Sigmoid colon (tissue), 7 donors: ENCODE measurements at regions of chr13 and their contacts with region 1.

Region 1: DNA sequence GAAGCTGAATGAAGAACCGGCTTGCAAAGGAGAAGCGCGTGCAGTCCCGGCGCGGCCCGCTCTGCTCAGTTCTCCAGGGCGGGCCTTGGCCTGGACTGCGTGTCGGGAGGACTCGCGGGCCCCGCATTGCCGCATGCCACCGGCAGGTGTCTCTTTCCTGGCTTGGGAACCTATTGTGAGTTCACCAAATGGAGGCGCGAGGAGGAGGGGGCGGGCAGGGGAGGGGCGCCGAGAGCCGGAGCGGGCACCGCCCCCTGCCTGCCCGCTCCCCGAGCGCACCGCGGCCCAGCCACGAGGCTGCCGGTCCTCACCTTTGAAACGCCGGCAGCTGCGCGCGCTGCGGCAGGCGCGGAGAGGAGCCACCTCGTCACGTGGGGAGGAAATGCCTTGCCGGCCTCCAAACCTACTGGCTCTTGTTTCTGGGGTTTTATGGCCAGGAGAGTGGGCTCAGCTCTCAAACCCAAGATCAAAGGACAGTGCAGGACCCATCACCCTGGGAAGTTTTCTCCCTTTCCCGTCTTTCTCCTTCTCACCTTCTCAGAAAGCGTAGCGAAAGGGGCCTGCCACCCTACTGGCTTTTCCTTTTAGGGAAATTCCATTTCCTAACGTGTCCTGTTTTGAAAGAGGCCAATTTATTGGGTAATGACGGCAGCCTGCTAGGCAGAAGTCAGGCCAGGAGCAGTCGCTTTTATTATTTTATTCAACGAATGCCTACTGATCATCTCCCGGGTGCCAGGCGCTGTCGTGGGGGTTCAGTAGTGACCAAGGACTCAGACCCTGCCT is 13.8 kb upstream of the UBE2L5 start:
- DNase-seq: peak; percentile 98
- H3K4me3 ChIP-seq: peak overlapping the region; percentile 2 to 42 (median 32)
- H3K27ac ChIP-seq: peak overlapping the region; percentile 84 to 91 (median 88)
- H3K4me1 ChIP-seq: peaks cover 0 to 23% (median 20%) of the 10 kb centered on the region in 4 donors
- H3K27me3 ChIP-seq: no peaks in the 10 kb centered on the region
- CTCF ChIP-seq: peak; percentile 59 to 90 (median 71)
- EP300 ChIP-seq: peak in 1 of 4 donors; percentile 14
- POLR2A ChIP-seq: no peak

Region 2: DNA sequence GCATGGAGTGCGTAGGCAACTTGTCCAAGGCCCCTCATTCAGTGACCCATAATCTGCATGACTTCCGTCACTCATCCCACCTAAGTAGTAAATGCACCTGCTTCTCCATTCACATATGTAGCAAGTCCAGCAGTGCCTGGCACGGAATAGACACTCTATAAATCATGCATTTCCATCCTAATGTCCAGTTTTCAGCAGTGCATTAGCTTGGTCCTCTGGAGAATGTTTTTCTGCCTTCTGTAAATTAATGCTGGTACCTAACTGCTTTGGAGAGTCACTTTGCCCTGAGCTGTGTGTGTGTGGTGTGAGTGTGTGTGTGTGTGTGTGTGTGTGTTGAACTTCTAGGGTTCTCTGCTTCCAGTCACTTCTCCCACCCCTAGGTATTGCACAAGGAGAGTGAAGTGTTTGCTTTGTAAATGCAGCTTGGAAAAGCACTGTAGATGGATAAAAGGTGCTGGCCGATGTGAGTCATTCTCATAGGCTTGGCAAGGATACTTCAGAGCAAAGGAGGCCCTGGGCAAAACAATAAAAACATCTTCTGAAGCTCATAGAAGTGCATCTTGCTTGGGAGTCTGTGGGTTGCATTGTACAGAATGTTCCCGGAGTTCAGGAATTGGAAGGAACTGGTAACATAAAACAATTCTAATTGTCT is 283.0 kb before region 1 on chr13:
- intact Hi-C with region 1: loop called (anchors 5 kb)
- DNase-seq: peak; percentile 90
- H3K4me3 ChIP-seq: no peak overlapping the region
- H3K27ac ChIP-seq: peak overlapping the region; percentile 64 to 91 (median 82)
- H3K4me1 ChIP-seq: peaks cover 0 to 66% (median 62%) of the 10 kb centered on the region in 4 donors
- H3K27me3 ChIP-seq: no peaks in the 10 kb centered on the region
- CTCF ChIP-seq: no peak
- EP300 ChIP-seq: peak; percentile 72 to 97 (median 88)
- POLR2A ChIP-seq: no peak

Region 3: GRCh38 chr13:30142486-30143211 is 265.9 kb before region 1 on chr13:
- intact Hi-C with region 1: loop called (anchors 5 kb)
- DNase-seq: peak; percentile 88
- H3K4me3 ChIP-seq: no peak overlapping the region
- H3K27ac ChIP-seq: peak overlapping the region; percentile 64 to 79 (median 74)
- H3K4me1 ChIP-seq: peaks cover 0 to 24% (median 22%) of the 10 kb centered on the region in 4 donors
- H3K27me3 ChIP-seq: no peaks in the 10 kb centered on the region
- CTCF ChIP-seq: no peak
- EP300 ChIP-seq: peak in 1 of 4 donors; percentile 20
- POLR2A ChIP-seq: no peak

Region 4: DNA sequence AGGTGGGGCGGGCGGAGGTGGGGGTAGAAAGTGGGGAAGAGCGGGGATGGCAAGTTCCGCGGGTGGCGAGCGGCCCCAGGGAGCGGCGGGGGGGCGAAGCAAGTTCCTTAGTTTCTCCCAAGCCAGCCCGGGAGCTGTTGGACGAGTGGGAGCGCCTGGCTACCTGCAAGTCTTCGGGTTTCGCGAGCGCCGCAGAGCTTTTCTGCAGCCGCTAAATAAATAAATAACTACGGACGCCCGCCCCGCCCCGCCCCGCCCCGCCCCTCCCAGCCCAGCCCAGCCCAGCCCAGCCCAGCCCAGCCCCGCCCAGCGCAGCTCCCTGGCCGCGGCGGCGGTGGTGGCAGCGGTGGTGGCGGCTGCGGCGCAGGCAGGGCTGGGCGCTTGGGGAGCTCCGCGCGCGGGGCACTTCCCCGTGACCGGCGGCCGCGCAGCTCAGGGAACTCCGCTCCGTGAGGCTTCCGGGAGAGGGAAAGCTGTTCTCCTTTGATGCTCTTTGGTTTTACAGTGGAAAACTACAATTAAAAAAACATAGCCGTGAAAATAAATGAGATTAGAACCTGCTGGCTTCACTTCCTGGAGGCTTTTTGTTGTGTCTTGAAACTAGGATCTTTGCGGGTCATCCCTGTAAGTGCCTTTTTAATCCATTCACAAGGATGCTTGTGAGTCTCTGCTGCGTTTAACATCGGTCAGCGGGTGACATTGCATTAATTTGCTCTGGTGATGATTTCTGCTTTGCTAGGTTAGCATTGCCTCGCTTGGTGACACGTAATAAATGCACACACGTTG is 13.7 kb after region 1 on chr13 and contains the start of gene UBE2L5:
- intact Hi-C with region 1: loop called (anchors 1 kb)
- DNase-seq: peak; percentile 94
- H3K4me3 ChIP-seq: peak within 1 kb of the TSS; percentile 49 to 63 (median 60)
- H3K27ac ChIP-seq: peak within 1 kb of the TSS; percentile 89 to 96 (median 90)
- H3K4me1 ChIP-seq: peaks cover 0 to 47% (median 36%) of the 10 kb centered on the region in 4 donors
- H3K27me3 ChIP-seq: no peaks in the 10 kb centered on the region
- CTCF ChIP-seq: no peak
- EP300 ChIP-seq: no peak
- POLR2A ChIP-seq: peak; percentile 3 to 68
- total RNA-seq, gene UBE2L5: 0.95 to 1.6 TPM in 2 of 4 donors, not detected in the others

Region 5: DNA sequence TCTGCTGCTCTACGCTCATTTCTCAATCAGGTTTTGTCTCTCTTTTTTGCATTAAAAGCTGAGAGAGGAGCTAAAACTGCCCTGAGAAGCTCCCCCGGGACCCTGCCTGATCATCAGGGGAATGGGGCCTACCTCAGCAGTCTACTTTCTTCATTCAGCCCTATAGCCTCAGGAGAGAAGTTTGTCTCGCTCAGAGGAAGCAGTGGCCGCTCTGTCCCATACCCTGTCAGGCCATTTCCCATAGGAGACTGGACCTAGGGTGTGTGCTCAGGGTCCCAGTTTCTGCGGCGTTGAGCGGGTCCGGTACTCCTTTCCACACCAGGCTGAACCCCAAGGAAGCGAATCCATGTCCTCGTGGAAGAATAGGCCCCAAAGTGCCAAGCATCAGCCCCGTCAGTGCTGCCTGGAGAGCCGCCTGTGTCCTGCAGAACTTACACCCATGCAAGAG is 35.5 kb after region 1 on chr13:
- intact Hi-C with region 1: loop called (anchors 1 kb)
- DNase-seq: no peak
- H3K4me3 ChIP-seq: no peak overlapping the region
- H3K27ac ChIP-seq: no peak overlapping the region
- H3K4me1 ChIP-seq: peaks cover 0 to 18% (median 14%) of the 10 kb centered on the region in 4 donors
- H3K27me3 ChIP-seq: no peaks in the 10 kb centered on the region
- CTCF ChIP-seq: no peak
- EP300 ChIP-seq: no peak
- POLR2A ChIP-seq: no peak